Vagina (tissue), 2 donors: ENCODE measurements at regions of chr5 and their contacts with region 1.

Region 1: GRCh38 chr5:37889612-37890317 is 49.9 kb upstream of the GDNF start:
- DNase-seq: no peak
- H3K4me3 ChIP-seq: no peak overlapping the region
- H3K27ac ChIP-seq: no peak overlapping the region
- H3K4me1 ChIP-seq: peaks cover 7% of the 10 kb centered on the region
- H3K27me3 ChIP-seq: no peaks in the 10 kb centered on the region
- CTCF ChIP-seq: no peak
- POLR2A ChIP-seq: no peak

Region 2: GRCh38 chr5:39668980-39669379 is 1779.2 kb after region 1 on chr5:
- intact Hi-C with region 1: loop called (anchors 5 kb)
- DNase-seq: no peak
- H3K4me3 ChIP-seq: no peak overlapping the region
- H3K27ac ChIP-seq: no peak overlapping the region
- H3K4me1 ChIP-seq: no peaks in the 10 kb centered on the region
- H3K27me3 ChIP-seq: no peaks in the 10 kb centered on the region
- CTCF ChIP-seq: no peak
- POLR2A ChIP-seq: no peak